Colonic mucosa (tissue), 4 donors: ENCODE measurements at regions of chr2 and their contacts with region 1.

Region 1: GRCh38 chr2:45700407-45701041 is 49.0 kb downstream of the PRKCE start:
- DNase-seq: no peak
- H3K4me3 ChIP-seq: no peak overlapping the region
- H3K27ac ChIP-seq: no peak overlapping the region
- H3K4me1 ChIP-seq: no peaks in the 10 kb centered on the region
- H3K27me3 ChIP-seq: no peaks in the 10 kb centered on the region
- CTCF ChIP-seq: no peak

Region 2: DNA sequence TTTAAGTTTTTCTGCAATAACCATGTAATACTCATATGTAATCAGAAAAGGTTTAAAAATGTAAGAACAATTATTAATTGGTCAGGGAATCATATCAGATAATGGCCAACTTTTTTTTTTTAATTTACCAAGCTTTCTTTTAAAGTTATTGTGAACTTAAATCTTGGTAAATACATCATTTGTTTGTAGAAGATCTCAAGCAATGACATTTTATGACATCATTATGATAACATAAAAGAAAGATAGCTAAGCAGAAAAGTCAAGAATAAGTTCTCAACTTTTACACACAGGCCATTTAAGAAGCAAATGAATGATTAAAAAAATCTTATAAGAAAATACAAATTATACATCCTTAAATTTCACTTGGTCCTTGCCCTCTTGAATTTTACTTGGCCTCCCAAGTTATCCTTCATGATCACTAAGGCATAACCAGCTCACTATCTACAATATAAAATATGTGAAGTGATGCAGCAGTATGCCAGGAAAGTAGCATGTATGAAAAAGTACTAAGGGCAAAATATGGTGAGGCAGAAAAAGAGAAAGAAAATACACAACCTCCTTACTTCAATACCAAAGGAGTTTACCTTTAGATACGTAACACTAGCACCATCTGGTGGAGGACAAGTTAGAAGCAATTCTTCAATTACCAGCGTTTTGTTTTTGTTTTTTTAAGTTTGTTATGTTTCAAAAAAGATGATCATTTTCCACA is 206.1 kb before region 1 on chr2:
- intact Hi-C with region 1: no loop called
- DNase-seq: peak; percentile 21
- H3K4me3 ChIP-seq: no peak overlapping the region
- H3K27ac ChIP-seq: no peak overlapping the region
- H3K4me1 ChIP-seq: no peaks in the 10 kb centered on the region
- H3K27me3 ChIP-seq: no peaks in the 10 kb centered on the region
- CTCF ChIP-seq: peak; percentile 70

Region 3: GRCh38 chr2:45595721-45596435 is 104.6 kb before region 1 on chr2:
- intact Hi-C with region 1: no loop called
- DNase-seq: peak; percentile 27
- H3K4me3 ChIP-seq: no peak overlapping the region
- H3K27ac ChIP-seq: no peak overlapping the region
- H3K4me1 ChIP-seq: no peaks in the 10 kb centered on the region
- H3K27me3 ChIP-seq: no peaks in the 10 kb centered on the region
- CTCF ChIP-seq: no peak

Region 4: GRCh38 chr2:45650851-45651414 is 49.6 kb before region 1 on chr2:
- intact Hi-C with region 1: loop called (anchors 10 kb)
- DNase-seq: peak; percentile 97
- H3K4me3 ChIP-seq: peak overlapping the region; percentile 82
- H3K27ac ChIP-seq: peak overlapping the region; percentile 91
- H3K4me1 ChIP-seq: peaks cover 13% of the 10 kb centered on the region
- H3K27me3 ChIP-seq: no peaks in the 10 kb centered on the region
- CTCF ChIP-seq: no peak